ENCODE measurements at regions of chr17 and their contacts with region 1.

Region 1: DNA sequence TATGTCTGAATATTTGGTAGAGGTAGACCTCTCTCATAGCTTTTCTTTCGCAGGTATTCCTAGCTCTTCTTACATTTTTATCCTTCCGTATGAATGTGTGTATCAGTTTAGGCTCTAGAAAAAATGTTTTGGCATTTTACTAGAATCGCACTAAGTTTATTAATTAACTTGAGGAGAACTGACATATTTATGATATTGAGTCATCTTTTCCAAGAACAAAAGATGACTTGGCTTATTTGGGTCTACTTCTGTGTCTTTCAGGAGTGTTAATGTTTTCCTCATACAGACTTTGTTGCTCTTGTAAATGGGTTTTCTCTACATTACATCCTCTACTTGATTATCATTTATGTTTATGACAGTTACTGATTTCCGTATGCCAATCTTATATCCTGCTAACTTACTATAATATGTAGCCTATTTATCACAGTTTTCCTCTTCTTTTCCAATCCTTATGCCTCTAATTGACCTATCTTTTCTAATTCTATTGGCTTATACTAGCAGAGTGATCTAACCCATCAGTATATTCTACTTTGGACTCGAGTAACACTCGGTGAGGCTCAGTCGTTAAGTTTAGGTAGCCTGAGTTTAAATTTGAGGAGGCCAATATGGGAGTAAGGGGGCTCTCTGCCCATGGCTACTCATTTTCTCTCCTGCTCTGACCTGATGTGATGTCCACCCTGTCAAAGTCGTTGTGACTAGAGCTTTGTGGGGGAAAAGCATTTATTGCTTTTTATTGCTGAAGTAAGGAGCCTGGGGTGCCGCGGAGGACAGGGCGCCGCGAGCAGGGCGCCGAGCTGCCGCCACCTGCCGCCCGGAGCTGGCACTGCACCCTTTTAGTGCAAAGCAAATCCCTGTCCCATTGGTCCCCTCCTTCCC is 20.0 kb downstream of the ST6GALNAC1 start:
- DNase-seq: peak; percentile 48
- H3K4me3 ChIP-seq: no peak overlapping the region
- H3K27me3 ChIP-seq: peaks cover 11% of the 10 kb centered on the region
- CTCF ChIP-seq: peak; percentile 91

Region 2: DNA sequence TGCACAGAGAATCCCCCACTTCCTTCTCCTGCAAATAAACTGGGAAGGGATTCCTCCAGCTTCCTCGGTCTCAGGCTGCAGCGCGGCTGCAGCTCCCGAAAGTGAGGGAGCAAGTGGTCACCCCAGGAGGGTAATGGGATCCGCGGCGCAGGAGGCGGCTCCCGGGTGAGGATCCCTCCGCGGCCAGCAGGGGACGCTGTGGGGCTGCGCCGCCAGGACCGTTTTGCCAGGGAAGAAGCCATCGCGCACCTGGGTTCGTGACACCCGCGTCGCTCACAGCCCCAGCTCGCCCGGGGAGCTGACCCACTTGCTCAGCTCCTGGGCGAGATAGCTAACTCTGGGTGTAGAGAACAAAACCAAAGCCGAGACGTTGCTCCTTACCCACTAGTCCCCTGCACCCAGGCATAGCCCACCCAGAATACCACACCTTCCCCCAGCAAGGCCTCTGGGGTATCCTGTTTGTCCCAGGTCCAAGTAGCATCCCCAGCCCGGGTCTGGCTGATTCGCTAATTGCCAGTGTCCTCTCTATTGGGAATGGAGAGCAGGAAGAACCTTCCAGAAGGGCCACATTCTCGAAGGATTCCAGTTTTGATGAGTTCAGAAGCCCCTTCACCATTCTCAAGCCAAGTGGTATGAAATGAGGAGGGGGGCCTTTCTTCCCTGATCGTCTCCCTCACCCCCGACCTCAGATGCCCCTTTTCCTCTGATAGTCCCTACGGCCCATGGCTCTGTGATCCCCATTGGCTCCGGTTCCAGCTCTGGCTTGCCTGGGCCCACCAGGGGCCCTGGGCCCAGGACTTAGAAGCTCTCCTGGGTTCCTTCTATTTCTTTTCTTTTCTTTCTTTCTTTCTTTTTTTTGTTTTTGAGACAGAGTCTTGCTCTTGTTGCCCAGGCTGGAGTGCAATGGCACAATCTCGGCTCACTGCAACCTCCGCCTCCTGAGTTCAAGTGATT is 100.1 kb before region 1 on chr17:
- CTCF ChIA-PET with region 1: interaction called, 68 read pairs
- POLR2A ChIA-PET with region 1: no interaction called
- DNase-seq: no peak
- H3K4me3 ChIP-seq: no peak overlapping the region
- H3K27me3 ChIP-seq: no peaks in the 10 kb centered on the region
- CTCF ChIP-seq: peak; percentile 100

Region 3: DNA sequence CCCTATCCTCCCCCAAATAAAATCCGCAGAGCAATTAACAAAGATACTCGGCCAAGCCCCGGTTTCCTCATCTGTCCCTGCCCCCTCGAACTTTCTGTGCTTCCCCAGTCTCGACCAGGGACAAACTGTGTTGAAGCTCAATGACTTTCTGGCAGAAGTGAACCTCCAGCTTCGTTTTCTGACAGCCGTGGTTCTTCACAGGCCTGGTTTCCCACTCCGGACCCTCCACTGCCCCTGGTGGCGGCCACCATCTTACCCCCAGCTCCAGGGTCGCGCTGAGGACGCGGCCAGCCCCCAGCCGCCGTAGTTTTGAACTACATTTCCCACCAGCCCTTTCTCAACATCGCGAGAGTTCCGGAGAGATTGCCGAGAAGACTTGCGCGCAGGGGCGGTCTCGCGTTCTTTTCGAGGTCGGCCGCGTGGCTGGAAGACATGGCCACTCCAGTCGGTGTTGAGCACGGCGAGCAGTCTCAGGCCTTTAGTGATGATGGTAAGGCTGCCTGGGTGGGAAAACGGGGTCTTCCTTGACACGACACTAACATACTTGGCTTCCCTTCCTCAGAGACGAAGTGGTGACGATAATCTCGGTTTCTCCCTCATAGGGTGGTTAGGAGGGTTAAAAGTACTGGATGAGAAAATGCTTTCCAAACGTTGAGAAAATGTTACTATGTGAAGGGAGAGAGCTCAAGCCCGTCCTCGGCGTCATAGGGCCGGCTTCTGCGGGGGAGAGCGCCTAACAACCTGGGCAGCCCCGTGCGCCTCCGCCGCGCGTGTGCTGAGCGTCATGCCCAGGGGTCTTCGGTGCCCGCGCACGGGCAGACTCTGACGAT is 65.9 kb before region 1 on chr17:
- CTCF ChIA-PET with region 1: interaction called, 47 read pairs
- POLR2A ChIA-PET with region 1: interaction called, 10 read pairs
- DNase-seq: peak; percentile 70
- H3K4me3 ChIP-seq: peak overlapping the region; percentile 92
- H3K27me3 ChIP-seq: no peaks in the 10 kb centered on the region
- CTCF ChIP-seq: peak; percentile 74

Region 4: GRCh38 chr17:76597728-76598474 is 25.6 kb before region 1 on chr17:
- CTCF ChIA-PET with region 1: interaction called, 22 read pairs
- POLR2A ChIA-PET with region 1: no interaction called
- DNase-seq: no peak
- H3K4me3 ChIP-seq: no peak overlapping the region
- H3K27me3 ChIP-seq: no peaks in the 10 kb centered on the region
- CTCF ChIP-seq: no peak

Region 5: GRCh38 chr17:76612977-76613851 is 10.3 kb before region 1 on chr17:
- CTCF ChIA-PET with region 1: interaction called, 14 read pairs
- POLR2A ChIA-PET with region 1: no interaction called
- DNase-seq: no peak
- H3K4me3 ChIP-seq: no peak overlapping the region
- H3K27me3 ChIP-seq: no peaks in the 10 kb centered on the region; the same call in 1 of the 2 replicates
- CTCF ChIP-seq: no peak

Region 6: DNA sequence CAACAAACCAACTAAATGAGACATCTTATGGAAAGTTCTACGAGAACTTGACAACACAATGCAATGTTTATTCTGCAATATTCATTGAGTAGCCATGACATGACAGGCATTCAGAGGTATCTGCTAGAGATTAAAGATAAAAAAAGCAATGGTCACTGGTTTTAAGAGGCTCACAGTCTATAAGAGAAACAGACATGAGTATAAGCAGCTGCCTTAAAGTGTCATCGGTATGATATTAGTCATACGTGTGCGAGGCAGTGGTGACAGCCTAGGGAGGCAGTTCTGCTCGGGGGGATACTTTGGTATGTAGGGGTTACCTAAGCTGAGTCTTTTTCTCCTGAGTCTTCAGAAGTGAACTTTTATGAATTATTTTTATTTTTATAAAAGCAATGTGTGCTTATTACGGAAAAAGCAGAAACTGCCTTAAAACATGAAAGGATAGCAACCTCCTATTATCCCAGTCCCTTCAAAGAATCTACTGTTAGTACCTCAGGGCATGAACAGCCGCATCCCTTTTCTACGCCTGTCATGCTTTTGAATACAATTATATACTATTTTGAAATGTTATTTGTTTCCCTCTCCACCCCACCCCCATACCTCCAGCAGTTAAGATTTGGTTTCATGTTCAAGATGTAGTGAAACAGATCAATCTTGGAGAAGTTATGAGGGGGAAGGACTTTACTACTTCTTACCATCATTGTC is 12.3 kb after region 1 on chr17:
- CTCF ChIA-PET with region 1: interaction called, 24 read pairs
- POLR2A ChIA-PET with region 1: no interaction called
- DNase-seq: no peak
- H3K4me3 ChIP-seq: no peak overlapping the region
- H3K27me3 ChIP-seq: no peaks in the 10 kb centered on the region
- CTCF ChIP-seq: no peak

Region 7: DNA sequence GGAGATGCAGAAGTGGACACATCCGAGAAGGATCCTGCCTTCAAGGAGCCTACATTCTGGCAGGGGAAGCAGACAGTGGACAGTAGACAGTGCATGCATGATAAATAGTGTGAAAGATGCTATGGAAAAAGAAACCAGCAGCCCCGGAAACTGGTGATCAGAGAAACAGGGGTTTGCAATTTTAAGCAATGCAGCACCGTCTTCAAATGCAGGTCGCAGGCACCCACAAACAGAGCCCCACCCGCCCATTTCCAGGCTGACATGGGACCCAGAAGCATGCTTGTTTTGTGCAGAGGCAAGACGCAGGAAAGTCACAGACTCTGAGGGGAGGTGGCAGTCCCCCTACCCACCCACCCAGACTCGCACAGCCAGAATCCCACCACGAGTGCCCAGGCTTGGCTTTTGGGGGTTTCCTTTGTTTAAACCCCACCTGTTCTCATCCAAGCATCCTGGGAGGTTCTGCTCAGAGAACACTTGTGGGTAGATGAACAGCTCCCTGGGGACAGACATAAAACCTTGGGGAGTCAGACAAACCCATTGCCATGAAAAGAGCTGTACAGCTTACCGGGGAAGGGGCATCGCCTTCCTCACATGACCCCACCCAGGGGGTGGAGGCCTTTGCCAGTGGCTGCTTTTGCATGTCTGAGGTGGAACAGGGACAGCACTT is 359.0 kb after region 1 on chr17:
- CTCF ChIA-PET with region 1: no interaction called
- POLR2A ChIA-PET with region 1: no interaction called
- DNase-seq: no peak
- H3K4me3 ChIP-seq: no peak overlapping the region
- H3K27me3 ChIP-seq: peaks cover 7% of the 10 kb centered on the region; the same call in 1 of the 2 replicates
- CTCF ChIP-seq: no peak

Measured in BJ (cell line).